GM18951 (cell line): ENCODE measurements at regions of chr4 and their contacts with region 1.

Region 1: GRCh38 chr4:123396307-123397143 is at the start of gene SPRY1:
- POLR2A ChIP-seq: peak; percentile 34

Region 2: DNA sequence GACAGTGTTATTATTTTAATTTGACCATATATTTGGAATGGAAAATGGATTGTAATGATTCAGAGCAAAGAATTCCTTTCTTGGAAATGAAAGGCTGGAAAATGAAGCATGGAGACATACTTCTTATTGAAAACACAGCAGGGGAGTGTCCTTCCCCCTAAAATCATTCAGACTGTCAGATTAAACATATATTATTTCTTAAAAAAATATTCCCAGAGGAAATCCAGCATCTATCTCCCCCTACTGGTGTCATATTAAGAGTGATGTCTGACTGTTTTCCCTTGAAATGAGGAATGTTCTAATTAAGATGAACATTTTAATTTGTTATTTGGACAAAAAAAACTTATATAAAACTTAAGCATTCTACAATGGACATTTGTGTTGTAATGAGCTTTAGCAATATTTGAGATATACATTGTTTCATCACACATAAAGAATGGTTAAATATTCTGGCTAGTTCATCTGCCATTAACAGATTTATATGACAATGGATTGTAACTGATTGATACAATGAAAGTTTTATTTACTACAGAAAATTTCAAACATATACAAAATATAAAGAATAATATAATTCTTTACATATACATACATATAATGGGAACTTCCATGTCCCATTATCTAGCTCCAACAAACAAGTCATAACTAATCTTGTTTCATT is 264.7 kb after region 1 on chr4:
- in situ Hi-C with region 1: loop called (anchors 10 kb)
- POLR2A ChIP-seq: no peak